Endothelial cell of umbilical vein (primary cell): ENCODE measurements at regions of chr12 and their contacts with region 1.

Region 1: DNA sequence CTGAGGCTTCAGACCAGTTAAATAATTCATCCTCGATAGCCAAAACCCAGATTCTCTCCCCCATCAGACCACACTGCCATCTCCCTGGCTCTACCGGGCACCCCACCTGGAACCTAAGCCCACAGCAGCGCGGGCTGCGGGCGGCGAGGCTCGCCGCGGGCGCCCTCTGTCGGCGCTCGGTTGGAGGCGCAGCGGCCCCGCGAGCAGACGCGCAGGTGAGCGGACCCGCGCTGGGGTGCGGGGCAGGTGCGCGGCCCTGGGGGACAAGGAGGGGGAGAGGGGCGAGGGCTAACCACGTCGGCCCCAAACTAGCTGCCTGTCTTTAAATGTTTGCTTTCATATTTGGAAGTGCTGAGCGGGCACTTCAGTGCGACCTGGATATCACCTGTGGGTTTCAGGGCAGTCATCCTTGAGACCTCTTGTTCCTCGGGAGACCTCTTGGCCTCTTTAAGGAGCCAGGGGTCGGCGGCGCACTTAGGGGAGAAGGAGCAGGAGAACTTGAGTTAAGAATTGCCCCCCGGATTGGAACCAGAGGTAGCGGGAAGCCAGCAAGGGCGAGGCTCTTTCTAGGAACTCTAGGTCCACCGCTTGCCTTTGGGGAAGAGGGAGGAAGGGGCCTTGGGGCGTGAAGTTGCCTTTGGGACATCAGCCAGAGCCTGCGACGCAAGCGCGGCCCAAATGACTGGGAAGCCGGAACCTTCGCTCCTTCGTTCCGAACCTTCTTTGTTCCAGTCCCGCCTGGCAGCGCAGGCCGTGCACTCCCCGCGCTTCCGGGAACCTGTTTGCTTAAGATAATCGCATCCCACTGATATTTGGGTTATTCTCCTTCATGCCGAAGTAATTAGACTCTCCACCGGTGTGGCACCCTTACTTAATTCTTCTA is 78.7 kb downstream of the NEDD1 start:
- DNase-seq: peak; percentile 23
- H3K4me3 ChIP-seq: peak overlapping the region; percentile 5 to 41 (median 39)
- H3K27ac ChIP-seq: no peak overlapping the region
- H3K4me1 ChIP-seq: peaks cover 7% of the 10 kb centered on the region
- H3K27me3 ChIP-seq: peaks cover 14 to 33% of the 10 kb centered on the region in 2 experiments
- CTCF ChIP-seq: peak; percentile 80 to 90
- POLR2A ChIP-seq: no peak

Region 2: GRCh38 chr12:97148941-97149559 is 163.3 kb after region 1 on chr12:
- CTCF ChIA-PET with region 1: interaction called, 3 read pairs
- POLR2A ChIA-PET with region 1: no interaction called
- dilution Hi-C with region 1: no loop called
- intact Hi-C with region 1: loop called (anchors 2 kb)
- DNase-seq: peak; percentile 31
- H3K4me3 ChIP-seq: no peak overlapping the region
- H3K27ac ChIP-seq: no peak overlapping the region
- H3K4me1 ChIP-seq: peaks cover 20% of the 10 kb centered on the region
- H3K27me3 ChIP-seq: no peaks in the 10 kb centered on the region
- CTCF ChIP-seq: peak; percentile 65 to 75
- POLR2A ChIP-seq: no peak

Region 3: DNA sequence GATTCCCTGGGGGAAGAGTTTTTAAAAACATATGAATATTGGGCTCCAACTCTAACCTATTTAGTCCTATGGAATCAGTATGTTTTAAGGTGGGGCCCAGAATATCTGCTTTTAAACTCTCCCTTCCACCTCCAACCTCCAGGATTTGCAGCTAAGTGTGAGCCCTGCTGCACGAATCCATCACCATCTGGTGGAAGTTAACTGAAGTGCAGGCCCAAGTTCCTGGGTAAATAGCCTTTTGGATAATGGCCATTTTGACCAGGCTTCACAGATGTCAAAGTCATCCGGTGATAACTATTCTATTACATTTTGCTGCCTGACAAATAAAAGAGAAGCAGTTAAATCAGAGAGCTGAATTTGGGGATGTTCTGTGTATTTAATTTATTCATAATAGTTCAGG is 418.8 kb after region 1 on chr12:
- CTCF ChIA-PET with region 1: interaction called, 13 read pairs
- POLR2A ChIA-PET with region 1: no interaction called
- dilution Hi-C with region 1: no loop called
- intact Hi-C with region 1: loop called (anchors 1 kb)
- DNase-seq: peak; percentile 44
- H3K4me3 ChIP-seq: no peak overlapping the region
- H3K27ac ChIP-seq: no peak overlapping the region
- H3K4me1 ChIP-seq: no peaks in the 10 kb centered on the region
- H3K27me3 ChIP-seq: no peaks in the 10 kb centered on the region
- CTCF ChIP-seq: peak; percentile 58 to 65
- POLR2A ChIP-seq: no peak

Region 4: DNA sequence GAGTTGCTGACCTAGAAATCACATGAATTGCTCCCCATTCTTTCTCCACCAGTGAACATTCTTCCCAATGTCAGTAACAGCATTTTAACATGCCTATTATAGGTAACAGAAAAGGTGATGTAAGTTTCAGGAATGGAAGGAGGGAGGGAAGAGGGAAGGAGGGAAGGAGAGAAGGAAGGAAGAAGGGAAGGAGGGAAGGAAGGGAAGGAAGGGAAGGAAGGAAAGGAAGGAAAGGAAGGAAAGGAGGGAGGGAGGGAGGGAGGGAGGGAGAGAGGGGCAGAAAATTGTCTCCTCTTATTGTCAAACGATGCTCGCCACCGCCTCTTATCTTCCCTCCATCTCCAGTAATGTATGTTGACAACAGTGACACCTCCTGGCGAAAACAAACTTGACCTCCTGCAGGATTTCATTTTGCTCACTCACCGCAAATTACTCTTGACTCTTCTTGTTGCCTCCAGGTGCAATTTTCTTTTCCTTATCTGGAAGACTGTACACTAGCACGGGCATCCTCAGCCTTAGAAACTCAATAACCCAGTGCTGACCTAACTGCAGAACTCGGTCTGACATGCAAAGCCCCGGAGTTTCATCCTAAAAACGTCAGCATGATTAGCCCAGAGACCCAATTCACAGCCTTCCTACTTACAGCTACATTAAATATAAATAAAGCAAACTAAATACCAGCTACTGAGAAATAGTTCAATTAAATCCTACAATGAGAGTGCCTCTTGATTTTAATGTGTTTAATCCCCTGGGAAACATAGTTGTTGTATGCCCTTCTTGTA is 1017.2 kb after region 1 on chr12:
- CTCF ChIA-PET with region 1: interaction called, 12 read pairs
- POLR2A ChIA-PET with region 1: no interaction called
- dilution Hi-C with region 1: no loop called
- intact Hi-C with region 1: loop called (anchors 2 kb)
- DNase-seq: peak; percentile 31
- H3K4me3 ChIP-seq: no peak overlapping the region
- H3K27ac ChIP-seq: no peak overlapping the region
- H3K4me1 ChIP-seq: no peaks in the 10 kb centered on the region
- H3K27me3 ChIP-seq: no peaks in the 10 kb centered on the region
- CTCF ChIP-seq: peak; percentile 33 to 46
- POLR2A ChIP-seq: no peak